ENCODE measurements at regions of chr2 and their contacts with region 1.

Region 1: DNA sequence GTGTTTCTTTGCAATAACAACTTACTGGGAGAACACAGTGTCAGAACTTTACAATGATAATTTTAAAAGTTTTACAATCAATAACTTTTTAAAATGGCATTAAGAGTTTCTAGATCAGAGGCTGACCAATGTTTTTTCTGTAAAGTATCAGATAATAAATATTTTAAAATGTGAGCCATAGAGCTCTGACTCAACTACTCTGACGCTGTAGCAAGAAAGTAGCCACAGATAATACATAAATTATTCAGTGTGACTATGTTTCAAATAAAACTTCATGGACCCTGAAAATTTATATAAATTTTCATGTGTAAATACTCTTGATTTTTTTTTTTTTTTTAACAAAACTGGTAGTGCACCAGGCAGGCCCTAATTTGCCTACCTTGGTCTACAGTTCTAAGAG is 77.4 kb downstream of the CUL3 start:
- DNase-seq: no peak
- ATAC-seq: no peak
- H3K4me3 Mint-ChIP-seq: no peak overlapping the region
- H3K27ac Mint-ChIP-seq: no peak overlapping the region
- H3K4me1 Mint-ChIP-seq: peaks cover 12% of the 10 kb centered on the region
- H3K27me3 Mint-ChIP-seq: no peaks in the 10 kb centered on the region
- CTCF ChIP-seq: no peak

Region 2: DNA sequence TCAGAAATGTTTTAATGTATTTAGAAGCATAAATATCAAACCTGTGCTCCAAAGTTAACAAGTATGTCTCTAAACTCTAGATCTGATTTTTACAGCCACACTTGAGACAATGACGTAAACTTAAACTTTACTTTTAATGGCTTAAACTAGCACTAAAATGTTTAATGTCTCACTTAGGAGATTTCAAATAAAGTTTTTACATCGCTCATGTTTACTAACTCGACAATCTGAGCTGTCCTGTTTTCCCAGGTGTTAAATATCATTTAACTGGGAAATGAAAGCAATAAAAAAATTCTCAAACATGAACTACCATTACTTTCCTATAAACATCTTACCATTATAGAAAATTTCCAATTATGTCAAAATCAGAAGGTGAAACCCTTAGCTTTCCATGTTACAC is 35.7 kb before region 1 on chr2:
- CTCF ChIA-PET with region 1: no interaction called
- POLR2A ChIA-PET with region 1: no interaction called
- intact Hi-C with region 1: loop called (anchors 5 kb)
- DNase-seq: no peak
- ATAC-seq: no peak
- H3K4me3 Mint-ChIP-seq: no peak overlapping the region
- H3K27ac Mint-ChIP-seq: no peak overlapping the region
- H3K4me1 Mint-ChIP-seq: peaks cover 2% of the 10 kb centered on the region
- H3K27me3 Mint-ChIP-seq: no peaks in the 10 kb centered on the region
- CTCF ChIP-seq: no peak

Region 3: DNA sequence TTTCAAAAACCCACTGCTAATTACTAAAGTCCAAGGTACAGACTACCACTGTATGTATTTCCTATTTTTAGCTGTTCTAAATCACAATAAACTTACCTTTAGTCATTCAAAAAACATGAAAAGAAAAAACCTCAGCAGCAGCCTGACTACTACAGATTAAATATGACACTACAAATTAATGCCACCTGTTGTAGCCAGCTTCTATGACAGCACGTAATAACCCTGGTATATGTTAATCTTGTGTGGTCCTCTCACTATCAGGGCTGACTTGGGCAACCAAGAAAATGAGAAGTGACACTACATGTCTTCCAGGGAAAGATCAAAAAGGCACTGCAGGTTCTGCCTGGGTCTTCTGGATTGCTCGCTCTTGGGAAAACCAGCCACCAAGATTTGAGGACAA is 15.3 kb before region 1 on chr2:
- CTCF ChIA-PET with region 1: no interaction called
- POLR2A ChIA-PET with region 1: no interaction called
- intact Hi-C with region 1: loop called (anchors 2 kb)
- DNase-seq: no peak
- ATAC-seq: no peak
- H3K4me3 Mint-ChIP-seq: no peak overlapping the region
- H3K27ac Mint-ChIP-seq: peak overlapping the region; percentile 46
- H3K4me1 Mint-ChIP-seq: peaks cover 45% of the 10 kb centered on the region
- H3K27me3 Mint-ChIP-seq: no peaks in the 10 kb centered on the region
- CTCF ChIP-seq: no peak

Region 4: GRCh38 chr2:224922142-224922727 is 414.4 kb after region 1 on chr2:
- CTCF ChIA-PET with region 1: no interaction called
- POLR2A ChIA-PET with region 1: no interaction called
- intact Hi-C with region 1: no loop called
- DNase-seq: no peak
- ATAC-seq: peak; percentile 63
- H3K4me3 Mint-ChIP-seq: peak overlapping the region; percentile 46
- H3K27ac Mint-ChIP-seq: peak overlapping the region; percentile 79
- H3K4me1 Mint-ChIP-seq: peaks cover 58% of the 10 kb centered on the region
- H3K27me3 Mint-ChIP-seq: no peaks in the 10 kb centered on the region
- CTCF ChIP-seq: no peak

Measured in activated B cell treated with CpG ODN at 0.5 μM for 24 hours (primary cell).